ENCODE measurements at regions of chr10 and their contacts with region 1.

Region 1: GRCh38 chr10:101840741-101841453 is 2.7 kb downstream of the KCNIP2 start:
- DNase-seq: peak; percentile 49 to 85 (median 62)
- ATAC-seq: peak; percentile 51
- H3K4me3 ChIP-seq: peak overlapping the region; percentile 41
- H3K4me3 Mint-ChIP-seq: peak overlapping the region; percentile 93
- H3K27ac ChIP-seq: no peak overlapping the region
- H3K27ac Mint-ChIP-seq: no peak overlapping the region
- H3K4me1 ChIP-seq: peaks cover 52% of the 10 kb centered on the region
- H3K4me1 Mint-ChIP-seq: peaks cover 64% of the 10 kb centered on the region
- H3K27me3 ChIP-seq: no peaks in the 10 kb centered on the region
- H3K27me3 Mint-ChIP-seq: peaks cover 8% of the 10 kb centered on the region
- CTCF ChIP-seq: peak; percentile 89

Region 2: DNA sequence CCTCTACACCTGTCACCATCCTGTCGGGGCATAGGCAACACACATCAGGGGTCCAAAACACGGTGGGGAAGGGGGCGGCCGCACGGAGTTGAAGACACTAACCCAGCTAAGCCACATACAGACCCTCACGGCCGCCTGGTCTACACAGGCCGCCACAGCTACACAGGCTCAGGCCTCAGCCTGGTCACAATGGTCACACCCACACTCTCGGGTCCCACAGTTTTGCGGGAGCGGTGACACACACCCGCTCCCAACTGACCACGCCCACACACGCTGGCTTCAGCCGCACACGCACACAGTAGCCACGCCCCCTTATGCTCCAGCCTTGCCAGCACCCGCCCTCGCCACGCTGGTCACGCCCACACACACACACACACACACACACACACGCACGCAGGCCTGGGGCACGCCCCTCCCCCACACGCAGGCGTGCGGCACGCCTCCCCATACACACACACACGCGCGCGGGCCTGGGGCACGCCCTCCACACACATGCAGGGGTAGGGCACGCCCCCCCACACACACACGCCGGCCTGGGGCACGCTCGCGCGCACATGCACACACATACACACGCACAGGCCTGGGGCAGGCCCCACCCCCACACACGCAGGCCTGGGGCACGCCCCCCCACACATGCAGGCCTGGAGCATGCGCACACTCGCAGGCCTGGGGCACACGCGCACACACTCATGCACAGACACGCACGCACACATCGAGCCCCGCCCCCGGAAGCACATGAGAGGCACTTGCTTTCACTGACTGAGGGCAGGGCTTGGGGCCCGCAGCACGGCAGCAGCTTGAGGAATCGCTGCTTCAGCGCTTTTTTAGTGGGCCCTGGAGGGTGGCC is 10.4 kb before region 1 on chr10:
- CTCF ChIA-PET with region 1: interaction called, 24 read pairs
- POLR2A ChIA-PET with region 1: interaction called, 4 read pairs
- intact Hi-C with region 1: no loop called
- DNase-seq: peak; percentile 91 to 99 (median 94)
- ATAC-seq: peak; percentile 79
- H3K4me3 ChIP-seq: peak overlapping the region; percentile 63
- H3K4me3 Mint-ChIP-seq: peak overlapping the region; percentile 94
- H3K27ac ChIP-seq: peak overlapping the region; percentile 76 to 85
- H3K27ac Mint-ChIP-seq: peak overlapping the region; percentile 99
- H3K4me1 ChIP-seq: peaks cover 69% of the 10 kb centered on the region
- H3K4me1 Mint-ChIP-seq: peaks cover 55% of the 10 kb centered on the region
- H3K27me3 ChIP-seq: no peaks in the 10 kb centered on the region
- H3K27me3 Mint-ChIP-seq: peaks cover 5% of the 10 kb centered on the region
- CTCF ChIP-seq: no peak

Region 3: DNA sequence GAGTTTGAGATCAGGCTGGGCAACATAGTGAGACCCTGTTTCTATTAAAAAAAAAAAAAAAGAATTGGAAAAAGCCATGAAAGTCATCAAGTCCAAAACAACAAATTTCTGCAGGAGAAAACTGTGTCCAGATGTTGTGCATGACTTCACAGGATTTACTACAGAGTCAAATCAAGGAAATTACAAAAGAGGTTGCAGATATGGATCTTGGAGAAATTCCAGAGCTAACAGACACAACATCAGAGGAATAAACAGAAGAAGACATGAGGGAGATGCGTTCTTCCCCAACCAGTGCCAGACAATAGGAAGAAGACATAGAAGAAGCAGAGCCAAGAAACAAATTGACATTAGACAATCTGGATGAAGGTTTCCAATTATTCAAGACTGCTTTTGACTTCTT is 27.0 kb after region 1 on chr10:
- CTCF ChIA-PET with region 1: no interaction called
- POLR2A ChIA-PET with region 1: no interaction called
- intact Hi-C with region 1: no loop called
- DNase-seq: no peak
- ATAC-seq: no peak
- H3K4me3 ChIP-seq: no peak overlapping the region
- H3K4me3 Mint-ChIP-seq: no peak overlapping the region
- H3K27ac ChIP-seq: no peak overlapping the region
- H3K27ac Mint-ChIP-seq: no peak overlapping the region
- H3K4me1 ChIP-seq: no peaks in the 10 kb centered on the region
- H3K4me1 Mint-ChIP-seq: no peaks in the 10 kb centered on the region
- H3K27me3 ChIP-seq: no peaks in the 10 kb centered on the region
- H3K27me3 Mint-ChIP-seq: no peaks in the 10 kb centered on the region
- CTCF ChIP-seq: no peak

Region 4: DNA sequence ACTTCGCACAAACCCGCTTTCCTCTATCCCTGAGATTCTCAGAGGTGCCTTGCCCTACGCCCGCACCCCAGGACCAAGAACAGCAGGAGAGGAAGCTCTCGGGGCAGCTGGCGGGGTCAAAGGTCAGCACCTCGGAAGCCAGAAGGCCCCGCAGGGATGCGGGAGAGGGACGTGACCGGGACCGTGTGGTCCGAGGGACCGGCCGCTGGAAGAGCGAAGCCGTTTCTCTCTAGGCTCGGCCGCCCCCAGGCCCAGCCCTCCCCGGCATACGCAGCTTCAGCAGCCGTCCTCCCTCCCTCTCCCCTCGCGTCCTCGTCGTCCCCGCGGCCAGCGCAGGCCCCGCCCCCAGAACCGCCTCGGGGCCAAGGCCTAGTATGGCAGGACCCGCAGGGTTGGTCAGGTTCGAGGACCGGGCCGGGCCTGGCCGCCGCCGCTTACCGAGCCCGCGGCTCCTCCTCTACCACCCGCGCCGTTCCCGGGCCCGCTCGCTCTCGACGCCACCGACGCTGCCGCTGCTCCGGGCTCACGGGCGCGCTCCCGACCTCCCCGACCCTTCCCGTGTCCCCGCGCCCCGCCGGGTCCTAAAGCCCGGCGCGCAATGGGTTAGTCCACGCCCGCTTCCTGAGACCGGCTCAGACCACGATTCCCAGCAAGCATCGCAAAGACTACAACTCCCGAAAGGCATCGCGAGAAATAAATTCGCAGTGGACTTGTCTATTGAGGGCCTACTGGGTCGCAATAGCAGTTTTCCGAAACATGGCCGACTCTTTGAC is 214.9 kb after region 1 on chr10 and contains the start of gene ARMH3:
- CTCF ChIA-PET with region 1: interaction called, 3 read pairs
- POLR2A ChIA-PET with region 1: interaction called, 10 read pairs
- intact Hi-C with region 1: no loop called
- DNase-seq: peak; percentile 75 to 96 (median 84)
- ATAC-seq: peak; percentile 93
- H3K4me3 ChIP-seq: peak within 1 kb of the TSS; percentile 84
- H3K4me3 Mint-ChIP-seq: peak within 1 kb of the TSS; percentile 96
- H3K27ac ChIP-seq: peak within 1 kb of the TSS; percentile 70 to 83
- H3K27ac Mint-ChIP-seq: peak within 1 kb of the TSS; percentile 87
- H3K4me1 ChIP-seq: peaks cover 48% of the 10 kb centered on the region
- H3K4me1 Mint-ChIP-seq: peaks cover 45% of the 10 kb centered on the region
- H3K27me3 ChIP-seq: no peaks in the 10 kb centered on the region
- H3K27me3 Mint-ChIP-seq: no peaks in the 10 kb centered on the region
- CTCF ChIP-seq: no peak
- total RNA-seq, gene ARMH3: 17.7 to 18.9 TPM

Region 5: DNA sequence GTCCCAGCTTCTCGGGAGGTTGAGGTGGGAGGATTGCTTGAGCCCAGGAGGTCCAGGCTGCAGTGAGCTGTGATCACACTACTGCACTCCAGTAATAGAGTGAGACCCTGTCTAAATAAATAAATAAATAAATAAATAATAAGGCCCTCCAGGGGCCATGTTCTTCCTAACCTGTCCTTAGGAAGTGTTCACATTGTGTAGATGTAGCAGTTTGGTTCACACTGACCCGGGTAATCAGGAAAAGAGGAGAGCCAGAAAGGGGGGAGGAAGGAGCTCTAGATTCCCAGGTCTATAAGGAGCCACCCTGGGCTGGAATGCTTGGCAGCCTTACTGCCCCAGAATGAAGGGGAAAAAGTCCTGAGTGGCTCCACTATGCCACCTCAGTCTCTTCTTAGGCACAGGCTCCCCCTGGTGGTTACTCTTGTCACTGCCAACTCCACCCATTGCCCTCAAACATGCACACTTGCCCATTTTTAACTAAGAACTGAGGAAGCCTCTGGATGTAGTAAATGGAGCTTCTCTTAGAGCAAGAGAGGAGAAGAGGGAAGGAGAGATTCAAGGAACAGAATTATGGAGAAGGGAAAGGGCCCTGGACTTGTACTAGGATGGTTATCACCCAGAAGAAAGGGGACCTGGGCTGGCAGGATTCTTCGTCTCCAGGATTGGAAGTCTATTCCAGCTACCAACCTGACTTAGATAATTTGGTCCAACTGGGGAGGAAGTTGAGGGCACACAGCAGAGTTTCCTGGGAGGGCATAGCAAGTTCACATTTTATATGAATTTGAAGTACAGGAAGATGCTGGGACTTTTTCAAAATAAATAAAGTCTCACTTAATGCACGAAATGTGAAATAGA is 232.0 kb after region 1 on chr10:
- CTCF ChIA-PET with region 1: interaction called, 9 read pairs
- POLR2A ChIA-PET with region 1: interaction called, 3 read pairs
- intact Hi-C with region 1: loop called (anchors 1 kb)
- DNase-seq: peak; percentile 68 to 88 (median 76)
- ATAC-seq: peak; percentile 98
- H3K4me3 ChIP-seq: no peak overlapping the region
- H3K4me3 Mint-ChIP-seq: no peak overlapping the region
- H3K27ac ChIP-seq: no peak overlapping the region
- H3K27ac Mint-ChIP-seq: no peak overlapping the region
- H3K4me1 ChIP-seq: peaks cover 11% of the 10 kb centered on the region
- H3K4me1 Mint-ChIP-seq: no peaks in the 10 kb centered on the region
- H3K27me3 ChIP-seq: no peaks in the 10 kb centered on the region
- H3K27me3 Mint-ChIP-seq: no peaks in the 10 kb centered on the region
- CTCF ChIP-seq: peak; percentile 81

Region 6: DNA sequence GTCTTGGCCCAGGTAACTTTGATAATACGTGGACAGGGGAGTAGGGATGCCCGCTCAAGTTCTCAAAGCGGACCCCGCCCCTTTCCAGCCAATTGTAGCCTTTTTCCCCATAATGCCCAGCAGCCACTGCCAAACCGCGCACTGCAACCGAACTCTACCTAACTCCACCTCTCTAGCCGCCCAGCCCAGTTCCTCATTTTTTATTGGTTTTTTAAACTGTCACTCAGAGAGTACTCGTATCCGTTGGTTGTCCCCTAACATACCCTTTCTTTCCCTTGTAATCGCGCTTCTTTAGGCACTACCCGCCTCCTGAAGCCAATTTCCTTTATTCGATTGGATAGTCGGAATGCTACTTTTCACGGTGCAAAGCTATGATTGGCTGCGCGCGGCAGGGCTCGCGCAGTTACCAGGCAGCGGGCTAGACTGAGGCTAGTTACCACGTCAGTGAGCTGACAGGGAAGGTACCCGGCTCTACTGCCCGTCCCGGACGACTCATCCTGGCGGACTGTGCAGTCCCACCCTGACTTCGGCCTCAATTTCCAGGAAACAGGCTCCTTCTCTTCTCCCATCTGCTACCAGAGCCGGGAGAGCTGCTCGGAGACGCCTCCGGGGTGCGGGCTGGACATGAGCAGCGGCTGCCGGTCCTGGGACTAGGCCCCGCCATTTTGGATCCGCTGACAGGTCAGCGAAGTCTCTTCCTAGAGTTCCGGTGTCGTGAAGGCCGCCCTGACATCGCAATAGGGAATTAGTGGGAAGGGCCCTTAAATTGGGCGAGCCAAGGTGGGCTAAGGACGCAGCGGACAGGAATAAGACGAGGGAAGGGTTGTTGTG is 404.4 kb after region 1 on chr10 and contains the start of gene GBF1:
- CTCF ChIA-PET with region 1: no interaction called
- POLR2A ChIA-PET with region 1: no interaction called
- intact Hi-C with region 1: loop called in 1 of 2 experiments (anchors 5 kb)
- DNase-seq: peak; percentile 76 to 99 (median 84)
- ATAC-seq: peak; percentile 89
- H3K4me3 ChIP-seq: peak within 1 kb of the TSS; percentile 74
- H3K4me3 Mint-ChIP-seq: peak within 1 kb of the TSS; percentile 96
- H3K27ac ChIP-seq: peak within 1 kb of the TSS; percentile 84 to 88
- H3K27ac Mint-ChIP-seq: peak within 1 kb of the TSS; percentile 86
- H3K4me1 ChIP-seq: peaks cover 60% of the 10 kb centered on the region
- H3K4me1 Mint-ChIP-seq: peaks cover 58% of the 10 kb centered on the region
- H3K27me3 ChIP-seq: peaks cover 20 to 28% of the 10 kb centered on the region in 2 experiments
- H3K27me3 Mint-ChIP-seq: peaks cover 40% of the 10 kb centered on the region
- CTCF ChIP-seq: no peak
- total RNA-seq, gene GBF1: 28.8 to 30.9 TPM

Region 7: DNA sequence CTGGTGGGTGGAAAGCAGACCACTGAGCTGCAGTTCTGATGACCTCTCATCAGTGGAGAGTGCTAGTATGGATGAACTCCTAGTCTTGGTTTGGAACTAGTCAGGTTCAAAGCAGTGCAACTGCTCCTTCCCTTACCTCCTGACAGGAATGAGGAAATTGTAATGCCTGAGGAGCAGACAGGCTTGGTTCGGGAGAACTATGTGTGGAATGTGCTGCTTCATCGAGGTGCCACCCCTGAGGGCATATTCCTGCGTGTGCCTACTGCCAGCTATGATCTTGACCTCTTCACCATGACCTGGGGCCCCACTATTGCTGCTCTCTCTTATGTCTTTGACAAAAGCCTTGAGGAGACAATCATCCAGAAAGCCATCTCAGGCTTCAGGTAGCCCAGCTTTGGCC is 527.2 kb after region 1 on chr10:
- CTCF ChIA-PET with region 1: no interaction called
- POLR2A ChIA-PET with region 1: no interaction called
- intact Hi-C with region 1: no loop called
- DNase-seq: no peak
- ATAC-seq: no peak
- H3K4me3 ChIP-seq: no peak overlapping the region
- H3K4me3 Mint-ChIP-seq: no peak overlapping the region
- H3K27ac ChIP-seq: no peak overlapping the region
- H3K27ac Mint-ChIP-seq: no peak overlapping the region
- H3K4me1 ChIP-seq: no peaks in the 10 kb centered on the region
- H3K4me1 Mint-ChIP-seq: no peaks in the 10 kb centered on the region
- H3K27me3 ChIP-seq: no peaks in the 10 kb centered on the region
- H3K27me3 Mint-ChIP-seq: no peaks in the 10 kb centered on the region
- CTCF ChIP-seq: no peak